H1 (cell line): ENCODE measurements at regions of chr6 and their contacts with region 1.

Region 1: DNA sequence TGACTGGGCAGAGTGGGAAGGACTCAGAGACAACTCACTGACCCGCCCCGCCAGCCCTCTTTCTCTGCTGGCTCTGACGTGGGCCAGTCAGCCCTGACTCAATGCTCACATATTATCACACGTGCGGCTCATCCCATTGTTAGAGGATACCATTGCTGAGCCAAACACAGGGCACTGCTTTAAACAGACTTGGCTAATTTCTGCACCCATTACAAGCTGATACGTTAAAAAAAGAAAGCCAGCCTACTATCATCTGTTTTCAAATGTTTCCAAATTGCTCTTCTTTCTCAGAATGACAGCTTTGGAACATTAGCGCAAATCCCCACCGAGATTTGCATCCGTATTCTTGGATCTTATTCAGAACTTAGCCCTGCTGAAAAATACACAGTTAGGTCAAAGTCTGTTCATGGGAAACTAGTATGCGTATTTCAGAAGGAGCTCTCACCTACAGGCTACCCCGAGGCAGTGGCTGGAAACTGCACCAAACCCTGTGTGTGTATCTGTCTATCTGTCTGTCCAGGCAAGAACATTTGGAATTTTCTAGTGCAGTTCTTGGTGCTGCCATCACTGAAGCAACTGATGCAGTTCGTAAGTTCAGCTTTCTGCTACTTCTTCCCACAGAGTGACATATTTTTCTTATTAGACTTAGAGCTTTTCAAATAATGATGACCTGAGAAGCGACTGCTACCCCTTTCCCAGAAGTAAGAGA is 32.8 kb downstream of the RAMACL start:
- DNase-seq: no peak
- H3K4me3 ChIP-seq: no peak overlapping the region
- H3K27ac ChIP-seq: no peak overlapping the region
- H3K4me1 ChIP-seq: peaks cover 2 to 15% (median 11%) of the 10 kb centered on the region in 4 experiments
- H3K27me3 ChIP-seq: no peaks in the 10 kb centered on the region
- CTCF ChIP-seq: no peak
- EP300 ChIP-seq: no peak
- POLR2A ChIP-seq: no peak
- RAD21 ChIP-seq: no peak

Region 2: GRCh38 chr6:166567107-166567506 is 13.4 kb after region 1 on chr6:
- CTCF ChIA-PET with region 1: interaction called, 14 read pairs
- POLR2A ChIA-PET with region 1: no interaction called
- DNase-seq: no peak
- H3K4me3 ChIP-seq: no peak overlapping the region
- H3K27ac ChIP-seq: no peak overlapping the region
- H3K4me1 ChIP-seq: peaks cover 1 to 9% (median 4%) of the 10 kb centered on the region in 4 experiments; a peak in 4 of 7 replicates
- H3K27me3 ChIP-seq: no peaks in the 10 kb centered on the region; a peak in 1 of 7 replicates
- CTCF ChIP-seq: no peak
- EP300 ChIP-seq: no peak
- POLR2A ChIP-seq: no peak
- RAD21 ChIP-seq: no peak